ENCODE measurements at regions of chr17 and their contacts with region 1.

Region 1: GRCh38 chr17:58447039-58447975 is 30.0 kb upstream of the RNF43 start:
- DNase-seq: peak; percentile 78
- H3K4me3 ChIP-seq: no peak overlapping the region
- H3K27ac ChIP-seq: no peak overlapping the region
- H3K4me1 ChIP-seq: no peaks in the 10 kb centered on the region
- H3K27me3 ChIP-seq: peaks cover 0 to 5% of the 10 kb centered on the region in 2 experiments
- CTCF ChIP-seq: peak; percentile 60 to 85
- POLR2A ChIP-seq: no peak

Region 2: DNA sequence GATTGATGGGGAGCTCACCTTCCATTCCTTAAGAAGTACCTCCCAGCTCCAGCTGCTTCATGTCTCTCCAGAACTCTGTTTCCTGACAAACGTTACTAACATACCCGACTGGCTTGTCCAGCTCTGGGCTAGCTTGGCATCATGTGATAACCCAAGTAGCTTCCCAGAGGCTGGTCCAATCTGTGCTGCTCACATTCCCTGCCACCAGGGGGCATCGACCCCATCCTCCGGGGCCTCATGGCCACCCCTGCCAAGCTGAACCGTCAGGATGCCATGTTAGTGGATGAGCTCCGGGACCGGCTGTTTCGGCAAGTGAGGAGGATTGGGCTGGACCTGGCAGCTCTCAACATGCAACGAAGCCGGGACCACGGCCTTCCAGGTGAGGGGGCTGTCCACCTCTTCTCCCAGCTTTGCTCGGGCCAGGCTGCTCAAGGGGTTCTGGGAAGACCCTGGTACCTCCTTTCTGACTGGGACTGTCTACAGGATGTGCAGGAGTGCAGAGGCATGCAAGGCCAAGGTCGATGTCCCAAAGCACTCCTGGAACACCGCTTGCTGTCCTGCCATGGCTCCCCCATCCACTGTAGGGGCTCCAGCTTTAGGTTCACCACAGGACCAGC is 247.2 kb before region 1 on chr17:
- CTCF ChIA-PET with region 1: interaction called, 21 read pairs
- POLR2A ChIA-PET with region 1: no interaction called
- dilution Hi-C with region 1: no loop called
- intact Hi-C with region 1: loop called (anchors 1 kb)
- DNase-seq: peak; percentile 43
- H3K4me3 ChIP-seq: no peak overlapping the region
- H3K27ac ChIP-seq: no peak overlapping the region
- H3K4me1 ChIP-seq: no peaks in the 10 kb centered on the region
- H3K27me3 ChIP-seq: peaks cover 0 to 3% of the 10 kb centered on the region in 2 experiments
- CTCF ChIP-seq: peak; percentile 65 to 75
- POLR2A ChIP-seq: no peak

Region 3: GRCh38 chr17:58277107-58277801 is 170.1 kb before region 1 on chr17:
- CTCF ChIA-PET with region 1: no interaction called
- POLR2A ChIA-PET with region 1: no interaction called
- dilution Hi-C with region 1: no loop called
- intact Hi-C with region 1: loop called (anchors 1 kb)
- DNase-seq: no peak
- H3K4me3 ChIP-seq: no peak overlapping the region
- H3K27ac ChIP-seq: no peak overlapping the region
- H3K4me1 ChIP-seq: no peaks in the 10 kb centered on the region
- H3K27me3 ChIP-seq: peaks cover 2 to 8% of the 10 kb centered on the region in 2 experiments
- CTCF ChIP-seq: peak in 1 of 2 donors; percentile 16
- POLR2A ChIP-seq: no peak

Region 4: GRCh38 chr17:58303971-58304725 is 143.2 kb before region 1 on chr17:
- CTCF ChIA-PET with region 1: interaction called, 15 read pairs
- POLR2A ChIA-PET with region 1: no interaction called
- dilution Hi-C with region 1: no loop called
- intact Hi-C with region 1: loop called (anchors 1 kb)
- DNase-seq: peak; percentile 26
- H3K4me3 ChIP-seq: no peak overlapping the region
- H3K27ac ChIP-seq: no peak overlapping the region
- H3K4me1 ChIP-seq: no peaks in the 10 kb centered on the region
- H3K27me3 ChIP-seq: peaks cover 0 to 6% of the 10 kb centered on the region in 2 experiments
- CTCF ChIP-seq: peak; percentile 80 to 84
- POLR2A ChIP-seq: no peak

Region 5: GRCh38 chr17:58317421-58318064 is 129.8 kb before region 1 on chr17:
- CTCF ChIA-PET with region 1: interaction called, 61 read pairs
- POLR2A ChIA-PET with region 1: no interaction called
- dilution Hi-C with region 1: no loop called
- intact Hi-C with region 1: loop called (anchors 1 kb)
- DNase-seq: peak; percentile 26
- H3K4me3 ChIP-seq: no peak overlapping the region
- H3K27ac ChIP-seq: no peak overlapping the region
- H3K4me1 ChIP-seq: no peaks in the 10 kb centered on the region
- H3K27me3 ChIP-seq: no peaks in the 10 kb centered on the region
- CTCF ChIP-seq: peak; percentile 46 to 71
- POLR2A ChIP-seq: no peak

Region 6: DNA sequence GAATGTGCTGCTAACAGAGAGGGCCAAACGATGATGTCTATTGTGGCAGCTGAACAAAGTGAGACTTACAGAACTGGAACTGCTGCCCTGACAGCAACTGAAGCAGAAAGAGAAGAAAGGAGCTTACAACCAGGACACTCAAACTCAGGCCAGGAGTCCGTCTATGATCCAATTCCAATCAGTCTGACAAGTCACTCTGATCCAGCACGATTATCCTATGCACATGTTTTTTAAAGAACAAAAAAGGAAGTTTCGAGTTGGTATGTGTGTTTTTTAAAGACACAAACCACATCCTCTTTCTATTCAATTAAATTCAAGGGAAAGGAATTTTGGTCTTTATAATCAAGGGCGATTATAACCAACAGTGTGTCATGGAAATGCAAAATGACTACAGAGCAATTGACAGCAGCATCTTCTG is 109.5 kb after region 1 on chr17:
- CTCF ChIA-PET with region 1: no interaction called
- POLR2A ChIA-PET with region 1: no interaction called
- dilution Hi-C with region 1: no loop called
- intact Hi-C with region 1: no loop called
- DNase-seq: no peak
- H3K4me3 ChIP-seq: no peak overlapping the region
- H3K27ac ChIP-seq: no peak overlapping the region
- H3K4me1 ChIP-seq: no peaks in the 10 kb centered on the region
- H3K27me3 ChIP-seq: peaks cover 0 to 3% of the 10 kb centered on the region in 2 experiments
- CTCF ChIP-seq: no peak
- POLR2A ChIP-seq: no peak

Region 7: DNA sequence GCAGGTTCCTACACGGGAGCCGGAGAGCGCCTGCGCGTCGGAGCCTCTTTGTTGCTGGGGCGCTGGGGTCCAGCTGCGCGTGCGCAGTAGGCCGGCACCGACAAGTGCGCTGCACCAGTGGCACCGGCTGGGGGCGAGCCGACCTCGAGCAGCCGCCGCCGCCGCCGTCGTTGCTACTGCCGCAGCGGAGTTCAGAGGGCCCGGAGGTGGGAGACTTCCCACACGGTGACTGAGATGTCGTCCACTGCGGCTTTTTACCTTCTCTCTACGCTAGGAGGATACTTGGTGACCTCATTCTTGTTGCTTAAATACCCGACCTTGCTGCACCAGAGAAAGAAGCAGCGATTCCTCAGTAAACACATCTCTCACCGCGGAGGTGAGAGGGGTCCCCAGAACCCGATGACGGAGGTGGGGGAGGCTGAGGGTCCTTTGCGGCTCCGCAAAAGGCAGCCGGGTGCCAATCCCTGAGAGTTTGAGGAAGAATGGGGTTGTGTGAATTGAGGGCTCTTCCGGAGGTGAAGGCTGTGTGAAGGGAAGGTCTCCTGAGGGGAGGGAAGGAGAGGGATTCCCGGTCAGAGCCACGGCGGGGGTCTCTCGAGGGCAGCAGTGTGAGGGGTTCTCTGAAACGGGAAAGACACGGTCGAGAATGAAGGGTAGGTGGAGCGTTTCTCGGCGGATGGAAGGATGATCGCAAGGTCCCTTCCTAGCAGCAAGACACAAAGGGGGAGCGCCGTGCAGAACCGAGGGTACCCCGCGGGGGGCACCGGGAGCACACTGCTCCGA is 773.3 kb after region 1 on chr17 and contains the start of gene GDPD1:
- CTCF ChIA-PET with region 1: no interaction called
- POLR2A ChIA-PET with region 1: no interaction called
- dilution Hi-C with region 1: no loop called
- intact Hi-C with region 1: no loop called
- DNase-seq: peak; percentile 97
- H3K4me3 ChIP-seq: peak within 1 kb of the TSS; percentile 39 to 67 (median 51)
- H3K27ac ChIP-seq: peak within 1 kb of the TSS; percentile 4
- H3K4me1 ChIP-seq: peaks cover 3% of the 10 kb centered on the region
- H3K27me3 ChIP-seq: no peaks in the 10 kb centered on the region
- CTCF ChIP-seq: peak; percentile 57 to 69
- POLR2A ChIP-seq: peak; percentile 33
- total RNA-seq, gene GDPD1: 4.3 and 4.9 TPM in 2 replicates

Measured in endothelial cell of umbilical vein (primary cell).